ENCODE measurements at regions of chr2 and their contacts with region 1.

Region 1: DNA sequence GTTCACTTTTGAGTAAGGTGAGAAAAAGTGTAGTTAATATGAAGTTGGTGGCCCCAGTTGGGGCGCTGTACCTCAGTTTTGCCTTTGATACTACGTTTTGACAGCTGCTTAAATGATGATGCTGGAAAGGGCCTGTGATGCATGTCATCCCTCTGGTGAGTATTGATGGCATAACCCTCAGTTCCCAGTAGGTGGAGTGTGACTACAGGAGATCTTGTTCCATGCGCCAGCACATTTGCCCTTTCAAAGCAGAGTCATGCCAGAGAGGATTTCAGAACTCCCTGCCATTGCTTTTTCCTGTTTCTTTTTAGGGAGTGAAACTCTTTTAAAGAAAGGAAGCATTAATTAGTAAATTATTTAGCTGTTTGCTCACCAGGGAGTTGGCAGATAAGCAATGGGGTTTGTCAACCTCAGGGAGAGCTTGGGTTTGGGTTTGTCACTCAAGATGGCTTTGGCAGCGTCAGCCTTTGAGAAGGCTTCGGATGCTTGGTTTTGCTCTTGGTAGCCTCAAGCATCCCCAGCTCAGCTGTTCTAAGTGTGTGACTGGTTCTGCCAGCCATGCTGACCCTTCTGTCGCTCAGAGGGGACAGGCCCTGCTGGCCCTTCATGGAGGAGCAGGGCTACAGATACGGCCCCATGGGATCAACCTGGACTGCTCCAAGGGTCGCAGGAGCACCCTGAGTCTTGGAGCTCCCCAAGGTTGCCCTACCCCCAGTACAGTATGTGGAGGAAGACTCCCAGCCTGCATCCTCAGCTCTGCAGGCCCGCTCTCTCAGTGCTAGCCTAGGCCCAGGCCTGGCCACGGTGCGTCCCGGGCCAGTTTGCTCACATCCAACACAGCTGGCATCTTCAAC is 29.1 kb downstream of the ARMC9 start:
- DNase-seq: peak; percentile 83
- CTCF ChIP-seq: peak; percentile 82

Region 2: GRCh38 chr2:230552181-230552580 is 675.4 kb before region 1 on chr2:
- in situ Hi-C with region 1: no loop called
- DNase-seq: no peak
- CTCF ChIP-seq: no peak

Region 3: DNA sequence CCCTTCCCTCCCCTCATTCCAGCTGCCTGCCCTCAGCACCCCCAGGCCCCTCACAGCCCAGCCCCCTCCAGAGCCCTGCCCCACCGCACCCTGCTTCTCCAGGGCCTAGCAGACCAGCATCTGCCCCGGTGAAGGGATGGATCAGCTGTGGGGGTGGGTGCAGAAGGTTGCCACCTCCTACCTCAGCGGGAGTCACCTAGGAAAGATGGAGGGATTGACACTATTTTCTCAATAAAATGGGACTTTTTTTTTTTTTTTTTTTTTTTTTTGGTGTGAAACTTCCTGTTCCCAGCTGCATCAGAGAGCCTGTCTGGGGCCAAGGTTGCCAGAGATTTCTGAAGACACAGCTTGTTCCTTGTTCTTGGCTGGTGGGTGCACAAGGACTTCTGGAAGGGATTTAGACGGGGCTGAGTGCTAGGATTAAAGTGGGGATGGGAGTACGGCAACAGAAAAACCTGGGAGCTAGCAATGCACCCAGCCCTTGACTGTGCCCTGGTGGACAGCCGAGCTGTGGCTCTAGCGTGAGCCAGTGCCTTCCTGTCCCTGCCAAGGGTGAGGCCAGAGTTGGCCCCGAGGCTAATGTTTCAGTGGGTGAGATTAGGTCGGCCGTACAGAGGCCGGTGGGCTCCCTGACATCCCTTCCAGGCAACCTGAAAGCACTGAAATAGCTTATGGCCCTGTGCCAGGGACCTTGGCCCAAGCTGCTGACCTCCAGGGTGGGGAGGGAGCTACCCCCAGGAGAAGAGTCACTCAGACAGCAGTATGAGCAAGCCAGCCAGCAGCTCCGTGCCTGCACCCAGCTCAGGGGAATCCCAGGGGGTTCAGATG is 172.5 kb after region 1 on chr2:
- in situ Hi-C with region 1: loop called (anchors 10 kb)
- DNase-seq: peak; percentile 38
- CTCF ChIP-seq: no peak